ENCODE measurements at regions of chr12 and their contacts with region 1.

Region 1: GRCh38 chr12:30847259-30847658 is 79.3 kb upstream of the TSPAN11 start:
- DNase-seq: no peak
- H3K4me3 ChIP-seq: no peak overlapping the region
- H3K27ac ChIP-seq: no peak overlapping the region
- H3K4me1 ChIP-seq: peaks cover 0 to 23% (median 0%) of the 10 kb centered on the region in 3 donors
- H3K27me3 ChIP-seq: no peaks in the 10 kb centered on the region
- CTCF ChIP-seq: peak; percentile 56 to 87 (median 68)
- POLR2A ChIP-seq: no peak

Region 2: GRCh38 chr12:30806989-30807694 is 40.1 kb before region 1 on chr12:
- intact Hi-C with region 1: no loop called
- DNase-seq: no peak
- H3K4me3 ChIP-seq: no peak overlapping the region
- H3K27ac ChIP-seq: no peak overlapping the region
- H3K4me1 ChIP-seq: peaks cover 0 to 5% (median 0%) of the 10 kb centered on the region in 3 donors
- H3K27me3 ChIP-seq: no peaks in the 10 kb centered on the region
- CTCF ChIP-seq: peak; percentile 56 to 91 (median 70)
- POLR2A ChIP-seq: no peak

Region 3: DNA sequence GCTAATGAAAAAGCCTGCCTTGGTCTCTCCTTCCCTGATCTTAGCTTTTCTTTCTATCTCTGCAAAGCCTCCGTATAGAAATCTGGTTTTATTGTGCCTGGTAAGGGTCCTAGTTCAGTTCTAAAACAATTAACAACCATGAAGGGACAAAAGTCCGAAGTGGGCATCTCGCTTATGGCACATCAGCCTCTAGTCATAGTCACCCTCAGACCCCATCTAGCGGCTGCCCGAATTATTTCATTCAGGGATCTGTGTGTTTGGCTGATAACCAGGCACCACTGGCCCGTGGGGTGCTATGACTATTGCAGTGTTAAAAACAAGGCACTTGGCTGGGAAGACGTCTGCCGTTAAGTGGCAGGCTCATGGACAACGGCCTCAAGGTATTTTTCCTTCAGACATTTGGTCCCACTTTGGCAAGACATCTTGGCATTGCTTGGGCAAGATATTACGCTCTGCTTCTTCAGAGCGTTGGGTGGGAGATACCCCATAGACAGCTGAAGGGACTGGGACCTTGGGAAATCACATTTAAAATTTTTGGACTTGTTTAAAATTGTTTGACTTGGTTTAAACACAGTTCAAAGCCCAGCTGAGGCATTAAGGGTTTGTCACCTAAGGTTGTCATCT is 391.6 kb after region 1 on chr12:
- intact Hi-C with region 1: loop called (anchors 10 kb)
- DNase-seq: no peak
- H3K4me3 ChIP-seq: peak overlapping the region in 1 of 4 donors; percentile 24
- H3K27ac ChIP-seq: no peak overlapping the region
- H3K4me1 ChIP-seq: peaks cover 2 to 14% (median 3%) of the 10 kb centered on the region in 3 donors
- H3K27me3 ChIP-seq: peaks cover 0 to 48% (median 0%) of the 10 kb centered on the region in 4 donors
- CTCF ChIP-seq: peak; percentile 29 to 76 (median 64)
- POLR2A ChIP-seq: no peak

Region 4: DNA sequence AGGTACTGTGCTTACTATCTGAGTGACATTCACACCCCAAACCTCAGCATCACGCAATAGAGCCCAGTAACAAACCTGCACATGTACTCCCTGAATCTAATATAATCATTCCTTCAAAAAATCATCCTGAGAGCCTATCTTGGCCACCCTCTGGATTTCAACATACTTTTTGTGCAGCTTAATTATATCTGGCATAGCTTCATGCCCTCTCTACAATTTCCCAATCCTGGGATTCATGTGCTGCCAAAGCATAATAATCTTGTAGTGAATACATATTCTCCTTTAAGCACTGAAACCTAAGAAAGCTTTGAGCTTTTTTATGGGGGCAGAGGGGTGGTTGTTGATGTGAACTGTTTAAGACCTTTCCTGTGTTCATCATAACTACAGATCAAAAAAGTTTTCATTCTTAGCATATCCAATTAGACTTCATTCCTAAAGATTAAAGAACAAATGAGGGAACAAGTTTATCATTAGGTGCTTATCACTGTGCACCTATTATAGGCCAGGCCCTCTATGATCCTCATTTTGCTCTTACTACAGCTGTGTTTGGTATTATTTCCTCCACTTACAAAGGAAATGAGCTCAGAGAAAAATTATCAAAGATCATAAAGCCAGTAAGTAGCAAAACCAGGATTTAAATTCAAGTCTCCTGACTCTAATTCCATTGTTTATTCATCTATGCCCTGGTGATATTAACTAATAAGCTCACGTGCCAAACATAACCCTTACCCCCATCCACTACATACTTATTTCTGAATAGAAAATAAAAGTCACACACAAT is 427.5 kb after region 1 on chr12:
- intact Hi-C with region 1: loop called (anchors 5 kb)
- DNase-seq: no peak
- H3K4me3 ChIP-seq: no peak overlapping the region
- H3K27ac ChIP-seq: no peak overlapping the region
- H3K4me1 ChIP-seq: no peaks in the 10 kb centered on the region
- H3K27me3 ChIP-seq: no peaks in the 10 kb centered on the region
- CTCF ChIP-seq: no peak
- POLR2A ChIP-seq: no peak

Region 5: GRCh38 chr12:31536672-31537071 is 689.4 kb after region 1 on chr12:
- intact Hi-C with region 1: no loop called
- DNase-seq: no peak
- H3K4me3 ChIP-seq: no peak overlapping the region
- H3K27ac ChIP-seq: no peak overlapping the region
- H3K4me1 ChIP-seq: no peaks in the 10 kb centered on the region
- H3K27me3 ChIP-seq: no peaks in the 10 kb centered on the region
- CTCF ChIP-seq: no peak
- POLR2A ChIP-seq: no peak